A549 (cell line): ENCODE measurements at regions of chr15 and their contacts with region 1.

Region 1: DNA sequence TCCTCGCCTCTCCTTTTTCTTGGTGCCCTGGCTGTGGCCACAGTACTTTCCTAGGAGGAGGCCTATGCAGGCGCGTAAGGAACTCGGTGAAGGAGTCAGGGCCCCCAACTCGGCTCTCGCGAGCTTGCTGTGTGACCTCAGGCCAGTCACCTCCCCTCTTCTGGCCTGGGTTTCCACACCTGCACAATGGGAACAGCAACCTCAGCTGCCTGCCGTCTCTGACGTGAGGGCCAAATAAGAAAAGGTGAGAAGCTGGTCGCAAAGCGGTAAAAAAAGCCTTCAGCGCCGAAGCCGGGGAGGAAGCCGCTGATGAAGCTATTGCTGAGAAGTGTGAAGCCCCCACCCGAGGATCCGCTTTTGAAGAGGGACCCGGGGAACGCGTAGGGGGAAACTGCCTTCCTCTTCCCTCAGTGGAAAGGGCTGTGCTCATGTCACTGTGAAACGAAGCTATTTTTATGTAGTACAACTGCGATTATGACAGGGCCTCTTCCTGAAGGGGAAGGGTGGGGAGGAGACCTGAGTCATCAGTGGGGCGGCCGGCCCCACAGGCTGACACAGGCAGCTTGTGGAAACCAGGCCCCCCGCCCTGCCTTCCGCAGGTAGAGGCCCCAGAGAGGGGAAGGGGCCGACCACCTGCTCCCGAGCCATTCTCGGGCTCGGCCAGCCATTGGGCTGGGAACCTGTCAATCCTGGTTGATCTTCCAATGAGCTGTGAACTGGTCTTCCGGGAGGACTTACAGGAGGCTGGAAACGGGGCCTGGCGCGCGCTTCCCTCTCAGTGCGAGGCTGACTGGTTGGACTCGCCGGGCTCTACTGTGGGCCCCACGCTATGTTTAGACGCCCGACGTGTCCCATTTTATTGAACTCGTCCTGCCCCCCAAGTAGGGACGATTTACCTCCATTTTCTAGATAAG is 18.0 kb upstream of the ANKDD1A start:
- DNase-seq: peak in 1 of 2 experiments; percentile 62
- ATAC-seq: peak in 1 of 2 experiments; percentile 31; a peak in 3 of 6 replicates
- H3K4me3 ChIP-seq: no peak overlapping the region
- H3K27ac ChIP-seq: no peak overlapping the region
- H3K4me1 ChIP-seq: peaks cover 10% of the 10 kb centered on the region; the same call in 2 of the 3 replicates
- CTCF ChIP-seq: no peak
- EP300 ChIP-seq: no peak
- POLR2A ChIP-seq: no peak
- RAD21 ChIP-seq: no peak

Region 2: DNA sequence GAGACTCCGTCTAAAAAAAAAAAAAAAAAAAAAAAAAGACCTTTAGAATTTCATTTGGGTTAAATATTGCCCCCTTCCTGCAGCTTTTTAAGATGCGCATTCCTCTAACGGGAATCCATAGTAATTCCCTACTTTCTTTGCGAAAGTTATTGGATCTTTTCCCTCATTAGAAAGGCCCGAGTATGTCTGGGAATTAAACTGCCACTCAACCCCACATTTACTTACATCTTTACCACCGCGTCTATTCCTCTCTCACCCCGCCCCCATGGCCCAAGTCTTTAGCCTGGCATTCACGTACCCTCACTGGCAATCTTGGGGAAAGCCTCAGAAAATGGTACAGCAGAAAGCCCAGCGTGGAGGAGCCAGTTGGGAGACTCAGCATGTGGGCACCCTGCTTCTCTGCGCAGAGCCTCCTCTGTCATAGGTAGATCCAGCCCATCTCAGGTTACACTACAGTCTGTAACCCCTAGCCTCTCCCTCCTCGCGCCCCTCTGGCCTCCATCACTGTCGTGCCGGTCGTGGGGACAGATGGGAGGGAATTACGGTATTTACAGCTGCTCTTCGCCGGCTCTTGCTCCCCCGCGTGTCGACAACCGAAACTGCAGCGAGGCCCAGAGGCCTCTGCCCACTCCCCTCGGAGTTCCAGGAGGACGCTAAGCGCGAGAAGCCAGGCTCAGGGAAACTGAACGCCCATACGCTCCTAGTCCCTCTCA is 11.5 kb after region 1 on chr15:
- CTCF ChIA-PET with region 1: interaction called, 17 read pairs
- POLR2A ChIA-PET with region 1: no interaction called
- DNase-seq: peak; percentile 70 to 79
- ATAC-seq: peak; percentile 90 to 92
- H3K4me3 ChIP-seq: 0 out of 3 replicates have a peak overlapping the region, but pooled peaks have one; percentile 1
- H3K27ac ChIP-seq: peak overlapping the region; percentile 14 to 55; a peak in 3 of 6 replicates
- H3K4me1 ChIP-seq: no peaks in the 10 kb centered on the region
- CTCF ChIP-seq: peak; percentile 42
- EP300 ChIP-seq: no peak
- POLR2A ChIP-seq: no peak
- RAD21 ChIP-seq: peak; percentile 57 to 58

Region 3: GRCh38 chr15:64930778-64931371 is 37.1 kb after region 1 on chr15:
- CTCF ChIA-PET with region 1: no interaction called
- POLR2A ChIA-PET with region 1: no interaction called
- DNase-seq: peak in 1 of 2 experiments; percentile 31
- ATAC-seq: peak in 1 of 2 experiments; percentile 67; a peak in 3 of 6 replicates
- H3K4me3 ChIP-seq: no peak overlapping the region
- H3K27ac ChIP-seq: no peak overlapping the region
- H3K4me1 ChIP-seq: no peaks in the 10 kb centered on the region
- CTCF ChIP-seq: no peak
- EP300 ChIP-seq: no peak
- POLR2A ChIP-seq: no peak
- RAD21 ChIP-seq: no peak